ENCODE measurements at regions of chr19 and their contacts with region 1.

Region 1: DNA sequence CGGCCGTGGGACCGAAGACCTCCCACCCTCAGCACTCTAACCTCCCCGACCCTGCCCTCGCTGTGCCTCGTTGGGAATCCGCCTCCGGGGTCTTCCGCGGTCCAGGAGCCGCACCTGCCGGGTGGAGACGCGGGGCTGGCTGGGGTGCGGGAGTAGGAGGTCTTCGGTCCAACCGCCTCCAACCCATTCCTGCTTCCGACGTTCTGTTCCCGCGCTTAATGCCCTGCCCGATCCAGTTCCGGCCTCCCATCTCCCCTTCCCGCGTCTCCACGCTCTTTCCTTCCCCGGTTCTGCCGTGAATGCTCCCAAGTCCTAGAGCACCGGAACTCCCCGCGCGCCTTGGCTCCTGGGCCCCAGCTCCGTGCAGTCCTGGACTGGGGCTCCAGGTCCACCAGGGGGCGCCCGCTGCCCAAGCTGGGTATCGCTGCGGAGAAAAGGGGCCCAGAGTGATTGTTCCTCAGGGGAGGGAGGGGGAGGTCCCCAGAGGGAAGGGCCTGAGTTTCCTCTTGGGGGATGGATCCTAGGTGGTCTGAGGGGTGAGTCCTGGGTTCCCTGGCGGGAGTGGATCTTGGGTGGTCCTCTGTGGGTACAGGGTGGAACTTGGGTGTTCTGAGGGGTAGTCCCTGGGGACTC is 14.1 kb upstream of the TNFSF9 start:
- DNase-seq: peak; percentile 96
- ATAC-seq: peak; percentile 93

Region 2: GRCh38 chr19:6066661-6067646 is 449.8 kb before region 1 on chr19:
- intact Hi-C with region 1: no loop called
- DNase-seq: peak; percentile 98
- ATAC-seq: peak; percentile 84

Region 3: DNA sequence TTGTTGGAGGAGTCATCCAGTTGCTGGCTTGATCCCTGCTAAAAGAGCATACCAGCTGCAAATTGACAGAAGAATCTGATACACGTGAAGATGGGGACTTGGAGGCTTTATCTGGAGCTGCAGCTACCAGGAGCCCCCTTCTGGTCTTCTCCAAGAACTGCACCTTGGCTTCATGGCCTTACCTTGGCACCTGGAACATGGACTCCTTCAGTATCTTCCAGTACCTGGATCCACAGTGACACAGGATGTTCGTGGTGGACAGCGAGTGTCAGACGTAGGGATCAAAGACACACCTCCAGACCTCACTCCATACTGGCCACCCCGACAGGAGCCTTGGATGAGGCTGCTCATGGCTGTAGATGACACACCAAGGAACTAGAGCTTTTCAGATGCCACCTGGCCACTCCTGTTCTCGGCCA is 391.2 kb before region 1 on chr19:
- intact Hi-C with region 1: no loop called
- DNase-seq: no peak
- ATAC-seq: peak; percentile 80

Region 4: GRCh38 chr19:6292006-6292405 is 224.8 kb before region 1 on chr19:
- intact Hi-C with region 1: no loop called
- DNase-seq: no peak
- ATAC-seq: no peak

Region 5: GRCh38 chr19:6402837-6403608 is 113.8 kb before region 1 on chr19:
- intact Hi-C with region 1: no loop called
- DNase-seq: peak; percentile 72
- ATAC-seq: no peak

Region 6: GRCh38 chr19:6632002-6632621 is 115.3 kb after region 1 on chr19:
- intact Hi-C with region 1: loop called (anchors 2 kb)
- DNase-seq: no peak
- ATAC-seq: peak; percentile 59

Region 7: DNA sequence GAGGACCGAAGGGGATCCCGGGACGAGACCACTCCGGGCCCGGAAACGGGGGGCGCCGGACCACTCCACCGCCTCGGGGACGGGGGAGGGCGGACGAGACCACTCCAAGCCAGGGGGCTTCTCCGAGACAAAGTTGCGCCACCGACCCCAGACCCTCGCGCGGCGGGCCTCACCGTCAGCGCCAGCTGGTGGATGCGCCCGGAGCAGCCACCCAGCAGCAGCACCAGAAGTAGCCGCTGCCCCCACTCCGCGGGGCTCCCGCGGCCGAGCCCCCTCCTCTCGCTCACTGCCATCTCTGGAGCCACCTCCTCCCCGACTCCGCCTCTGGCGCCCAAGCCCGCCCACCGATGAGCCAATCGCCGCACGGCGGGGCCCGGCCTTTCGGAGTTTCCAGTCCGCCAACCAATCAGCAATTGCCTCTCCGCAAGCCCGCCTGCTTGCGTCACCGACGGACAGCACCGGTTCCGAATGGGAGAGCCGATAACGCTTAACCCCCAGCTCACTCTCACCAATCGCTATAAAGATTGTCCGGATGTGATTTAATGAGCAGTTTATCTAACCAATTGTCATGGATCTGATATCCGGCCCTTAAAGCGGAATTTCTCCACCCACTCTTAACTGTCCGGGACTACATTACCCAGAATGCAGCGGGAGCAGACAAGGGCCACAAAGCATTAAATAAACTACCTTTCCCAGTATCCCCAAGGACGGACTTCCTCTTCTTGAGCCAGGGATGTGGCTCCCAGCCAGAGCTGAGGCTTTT is 220.7 kb after region 1 on chr19 and contains the start of gene GPR108:
- intact Hi-C with region 1: loop called (anchors 2 kb)
- DNase-seq: peak; percentile 100
- ATAC-seq: peak; percentile 83
- total RNA-seq, gene GPR108: 23.9 TPM

Region 8: DNA sequence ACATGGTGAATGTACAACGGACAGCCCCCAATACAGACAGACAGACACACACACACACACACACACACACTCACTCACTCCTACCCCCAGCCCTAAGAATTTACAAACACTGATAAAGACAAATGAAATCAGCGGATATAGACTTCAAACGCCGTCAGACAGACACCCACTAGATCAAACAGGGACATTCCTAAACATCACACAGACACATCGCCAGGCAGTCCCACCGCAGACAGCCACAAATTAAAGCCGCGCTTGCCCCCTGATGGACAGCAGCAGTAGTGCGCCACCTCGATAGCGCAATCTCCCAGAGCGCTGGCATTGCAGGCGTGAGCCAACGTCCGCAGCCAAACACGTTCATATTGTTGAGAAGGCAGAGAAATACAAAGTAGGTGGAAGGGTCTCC is 345.9 kb after region 1 on chr19:
- intact Hi-C with region 1: loop called (anchors 2 kb)
- DNase-seq: peak; percentile 89
- ATAC-seq: peak; percentile 93

Region 9: GRCh38 chr19:7004313-7004931 is 487.6 kb after region 1 on chr19:
- intact Hi-C with region 1: loop called (anchors 10 kb)
- DNase-seq: no peak
- ATAC-seq: no peak